ENCODE measurements at regions of chr5 and their contacts with region 1.

Region 1: DNA sequence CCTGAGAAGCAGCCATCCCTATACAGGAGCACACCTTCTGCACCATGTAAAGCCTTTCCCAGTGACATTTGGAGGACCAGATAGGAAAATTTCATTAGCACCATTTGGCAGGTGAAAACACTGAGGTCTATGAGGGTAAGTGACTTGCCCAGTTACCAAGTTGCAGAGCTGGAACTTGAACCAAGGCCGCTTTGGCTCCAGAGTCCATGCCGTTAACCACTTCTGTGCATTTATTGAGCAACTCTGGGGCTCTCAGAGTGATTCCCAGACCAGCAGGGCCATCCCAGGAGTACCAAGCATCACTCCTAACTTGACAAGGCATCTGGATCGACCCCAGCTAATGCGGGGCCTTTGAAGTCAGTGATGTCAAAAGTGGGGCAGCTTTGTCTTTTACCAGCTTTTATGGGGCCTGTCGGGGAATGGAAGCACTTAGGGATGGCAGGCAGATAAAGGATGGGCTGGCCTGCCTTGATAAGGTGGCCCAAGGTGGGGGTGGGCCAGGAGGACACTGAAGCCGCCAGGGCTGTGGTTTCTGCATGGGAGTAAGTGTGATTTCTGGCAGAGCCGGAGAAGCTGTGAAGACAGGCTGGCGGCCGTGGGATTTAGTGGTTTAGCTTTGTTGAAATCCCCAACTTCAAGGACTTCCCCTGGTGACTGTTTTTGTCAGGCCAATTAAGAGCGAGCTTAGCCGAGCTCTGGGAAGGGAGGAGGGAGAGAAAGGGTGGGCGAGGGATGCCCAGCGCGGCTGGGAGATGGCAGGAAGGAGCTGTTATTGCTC is 127.3 kb downstream of the MACROH2A1 start:
- DNase-seq: no peak
- ATAC-seq: peak; percentile 5 to 25 (median 17)
- H3K4me3 ChIP-seq: no peak overlapping the region
- H3K27ac ChIP-seq: peak overlapping the region; percentile 83
- H3K4me1 ChIP-seq: peaks cover 39% of the 10 kb centered on the region
- H3K27me3 ChIP-seq: no peaks in the 10 kb centered on the region
- CTCF ChIP-seq: no peak

Region 2: GRCh38 chr5:135245521-135246499 is 25.9 kb before region 1 on chr5:
- intact Hi-C with region 1: loop called in 1 of 2 experiments (anchors 2 kb)
- DNase-seq: no peak
- ATAC-seq: no peak
- H3K4me3 ChIP-seq: no peak overlapping the region
- H3K27ac ChIP-seq: peak overlapping the region; percentile 90
- H3K4me1 ChIP-seq: peaks cover 55% of the 10 kb centered on the region
- H3K27me3 ChIP-seq: no peaks in the 10 kb centered on the region
- CTCF ChIP-seq: no peak

Region 3: GRCh38 chr5:135310328-135310989 is 38.7 kb after region 1 on chr5:
- intact Hi-C with region 1: no loop called
- DNase-seq: no peak
- ATAC-seq: no peak
- H3K4me3 ChIP-seq: no peak overlapping the region
- H3K27ac ChIP-seq: no peak overlapping the region
- H3K4me1 ChIP-seq: no peaks in the 10 kb centered on the region
- H3K27me3 ChIP-seq: peaks cover 0 to 1% (median 0%) of the 10 kb centered on the region in 3 donors
- CTCF ChIP-seq: no peak